Vagina (tissue), 2 donors: ENCODE measurements at regions of chr2 and their contacts with region 1.

Region 1: DNA sequence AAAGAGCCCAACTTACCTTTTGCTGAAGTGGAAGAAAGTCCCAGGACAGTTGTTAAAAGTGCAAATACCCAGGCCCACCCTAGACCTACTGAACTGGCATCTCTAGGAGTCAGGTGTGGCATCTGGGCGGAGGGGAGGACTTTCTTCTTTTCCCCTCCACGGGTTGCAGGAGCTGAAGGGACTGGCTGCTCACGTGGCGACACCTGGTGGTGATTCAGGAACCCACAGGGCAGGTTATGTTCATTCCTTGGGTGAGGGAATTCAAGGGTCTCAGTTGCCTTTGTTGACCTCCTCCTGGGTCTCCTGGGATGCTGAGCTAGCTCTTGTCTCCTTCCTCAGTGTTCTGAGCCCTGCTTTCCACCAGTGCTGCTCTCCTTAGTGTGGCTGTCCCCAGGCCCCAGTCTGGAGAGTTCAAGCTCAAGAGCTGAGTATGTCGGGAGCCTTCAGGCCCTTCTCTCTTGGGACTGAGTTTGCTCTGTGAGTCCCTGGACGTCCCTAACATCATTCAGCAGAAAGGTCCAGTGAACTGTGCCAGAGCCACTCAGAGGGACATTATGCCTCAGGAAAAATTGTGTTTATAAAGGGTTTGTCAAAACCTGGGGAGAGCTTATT is 56.9 kb downstream of the DYSF start:
- DNase-seq: no peak
- H3K4me3 ChIP-seq: no peak overlapping the region
- H3K27ac ChIP-seq: no peak overlapping the region
- H3K4me1 ChIP-seq: no peaks in the 10 kb centered on the region
- H3K27me3 ChIP-seq: no peaks in the 10 kb centered on the region
- CTCF ChIP-seq: peak; percentile 39 to 93 (median 91)
- POLR2A ChIP-seq: no peak

Region 2: GRCh38 chr2:71256421-71256820 is 253.9 kb before region 1 on chr2:
- intact Hi-C with region 1: no loop called
- DNase-seq: no peak
- H3K4me3 ChIP-seq: no peak overlapping the region
- H3K27ac ChIP-seq: no peak overlapping the region
- H3K4me1 ChIP-seq: no peaks in the 10 kb centered on the region
- H3K27me3 ChIP-seq: no peaks in the 10 kb centered on the region
- CTCF ChIP-seq: no peak
- POLR2A ChIP-seq: no peak

Region 3: DNA sequence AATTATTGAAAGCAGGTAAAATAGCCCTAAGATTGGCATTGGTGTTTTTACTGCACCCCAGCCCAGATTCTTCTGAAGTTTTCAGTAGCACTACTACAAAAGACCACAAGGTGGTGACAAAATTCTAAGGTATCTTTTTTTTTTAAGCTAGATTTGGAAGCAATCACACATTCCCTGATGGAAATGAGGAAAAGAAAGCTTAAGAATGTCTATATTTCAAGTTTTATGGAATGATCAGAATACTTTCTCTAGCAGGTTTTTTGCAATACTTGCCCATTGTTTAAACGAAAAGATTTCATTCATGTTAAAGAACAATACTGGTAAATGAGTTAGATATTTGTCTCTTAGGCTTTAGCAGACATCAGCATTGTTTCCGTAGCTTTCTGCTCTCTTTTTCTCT is 210.8 kb before region 1 on chr2:
- intact Hi-C with region 1: loop called (anchors 5 kb)
- DNase-seq: no peak
- H3K4me3 ChIP-seq: no peak overlapping the region
- H3K27ac ChIP-seq: no peak overlapping the region
- H3K4me1 ChIP-seq: no peaks in the 10 kb centered on the region
- H3K27me3 ChIP-seq: no peaks in the 10 kb centered on the region
- CTCF ChIP-seq: peak; percentile 42 to 50 (median 48)
- POLR2A ChIP-seq: no peak

Region 4: DNA sequence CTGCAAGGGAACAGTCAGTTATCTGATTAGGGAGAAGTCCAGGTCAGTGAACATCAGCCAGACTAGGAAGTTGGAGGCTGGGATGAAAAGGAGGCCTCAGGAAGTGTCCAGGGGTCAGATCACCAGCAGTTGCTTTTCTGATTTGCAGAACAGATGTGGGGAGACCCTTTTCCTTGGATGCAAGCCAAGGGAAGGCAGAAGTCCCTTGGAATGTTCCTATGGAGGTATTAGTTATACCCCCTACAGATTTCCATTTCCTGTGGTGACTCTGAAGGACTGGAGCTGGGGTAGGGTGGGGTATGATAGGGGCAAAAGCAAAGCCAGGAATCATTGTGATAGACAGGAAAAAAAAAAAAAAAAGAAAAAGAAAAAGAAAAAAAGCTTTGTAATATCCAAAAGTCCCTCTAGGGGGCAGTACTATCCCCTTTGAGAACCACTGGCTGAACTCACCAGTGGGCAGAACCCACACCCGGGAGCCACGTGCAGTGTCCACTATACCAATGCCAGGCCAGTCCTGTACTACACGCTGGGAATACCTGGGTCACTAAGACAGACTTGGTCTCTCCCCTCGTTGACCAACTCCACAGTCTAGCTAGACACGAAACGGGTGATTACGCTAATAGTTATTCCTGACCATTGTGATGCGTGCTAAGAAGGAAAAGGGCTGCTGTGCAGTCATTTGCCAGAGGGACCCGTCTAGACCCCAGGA is 49.6 kb before region 1 on chr2:
- intact Hi-C with region 1: loop called (anchors 5 kb)
- DNase-seq: peak; percentile 58 to 64
- H3K4me3 ChIP-seq: no peak overlapping the region
- H3K27ac ChIP-seq: no peak overlapping the region
- H3K4me1 ChIP-seq: peaks cover 5% of the 10 kb centered on the region
- H3K27me3 ChIP-seq: peaks cover 2% of the 10 kb centered on the region
- CTCF ChIP-seq: peak in 1 of 3 experiments; percentile 21
- POLR2A ChIP-seq: no peak

Region 5: DNA sequence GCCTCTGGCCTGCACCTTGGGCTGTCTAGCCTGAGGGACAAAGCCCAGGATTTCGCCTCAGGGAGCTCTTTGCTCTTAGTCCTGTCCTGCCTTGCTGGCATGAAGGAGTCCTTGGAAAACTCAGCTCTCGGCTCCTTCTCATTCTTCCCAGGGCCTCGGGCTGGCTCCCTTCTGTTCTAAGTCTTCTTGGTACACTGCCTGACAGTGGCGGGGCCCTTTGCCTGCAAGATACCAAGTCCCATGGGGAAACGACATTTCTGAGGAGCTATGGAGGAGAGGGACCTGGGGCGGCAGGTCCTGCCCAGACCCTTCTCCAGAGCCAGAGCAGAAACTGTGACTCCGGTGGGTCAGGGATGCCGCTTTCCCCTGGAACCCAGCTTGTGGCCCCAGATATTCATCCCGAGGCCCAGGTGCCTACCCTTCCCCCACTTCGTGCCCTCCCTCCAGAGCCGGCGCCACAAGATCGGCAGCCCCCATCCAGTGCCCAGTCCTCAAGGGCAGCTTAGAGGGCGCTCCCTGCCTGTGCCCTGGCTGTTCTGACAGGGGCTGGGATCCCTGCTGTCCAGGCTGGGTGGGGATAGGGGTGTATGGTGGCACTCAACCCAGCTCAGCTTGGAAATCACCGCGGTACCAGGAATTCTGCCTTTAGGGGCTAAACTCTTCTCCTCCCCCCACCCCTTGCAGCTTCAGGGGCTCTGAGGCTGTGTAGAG is 642.9 kb after region 1 on chr2:
- intact Hi-C with region 1: no loop called
- DNase-seq: peak; percentile 82 to 87
- H3K4me3 ChIP-seq: no peak overlapping the region
- H3K27ac ChIP-seq: no peak overlapping the region
- H3K4me1 ChIP-seq: peaks cover 14% of the 10 kb centered on the region
- H3K27me3 ChIP-seq: no peaks in the 10 kb centered on the region
- CTCF ChIP-seq: no peak
- POLR2A ChIP-seq: no peak